Motor neuron (in vitro differentiated cells): ENCODE measurements at regions of chr17 and their contacts with region 1.

Region 1: GRCh38 chr17:74864866-74865395 is 5.2 kb upstream of the GRIN2C start:
- ATAC-seq: peak; percentile 50 to 73 (median 61)
- H3K4me3 ChIP-seq: no peak overlapping the region
- H3K27ac ChIP-seq: no peak overlapping the region
- H3K4me1 ChIP-seq: peaks cover 7 to 20% of the 10 kb centered on the region in 2 donors

Region 2: GRCh38 chr17:74325743-74326379 is 539.1 kb before region 1 on chr17 and contains the start of gene KIF19:
- in situ Hi-C with region 1: no loop called
- ATAC-seq: peak; percentile 77 to 95 (median 81)
- H3K4me3 ChIP-seq: peak within 1 kb of the TSS in 4 of 5 donors; percentile 9 to 17 (median 12)
- H3K27ac ChIP-seq: no peak within 1 kb of the TSS
- H3K4me1 ChIP-seq: peaks cover 5 to 9% of the 10 kb centered on the region in 2 donors
- total RNA-seq, gene KIF19: 0.11 to 3.3 (median 1.2) TPM in 6 of 8 experiments, not detected in the others

Region 3: GRCh38 chr17:74790161-74791054 is 74.5 kb before region 1 on chr17:
- in situ Hi-C with region 1: loop called in 3 of 9 experiments (anchors 5 to 10 kb)
- ATAC-seq: no peak
- H3K4me3 ChIP-seq: no peak overlapping the region
- H3K27ac ChIP-seq: no peak overlapping the region
- H3K4me1 ChIP-seq: no peaks in the 10 kb centered on the region

Region 4: GRCh38 chr17:74798239-74798707 is 66.7 kb before region 1 on chr17:
- in situ Hi-C with region 1: loop called in 3 of 9 experiments (anchors 5 to 10 kb)
- ATAC-seq: no peak
- H3K4me3 ChIP-seq: no peak overlapping the region
- H3K27ac ChIP-seq: no peak overlapping the region
- H3K4me1 ChIP-seq: no peaks in the 10 kb centered on the region